AG04449 (cell line): ENCODE measurements at regions of chr7 and their contacts with region 1.

Region 1: DNA sequence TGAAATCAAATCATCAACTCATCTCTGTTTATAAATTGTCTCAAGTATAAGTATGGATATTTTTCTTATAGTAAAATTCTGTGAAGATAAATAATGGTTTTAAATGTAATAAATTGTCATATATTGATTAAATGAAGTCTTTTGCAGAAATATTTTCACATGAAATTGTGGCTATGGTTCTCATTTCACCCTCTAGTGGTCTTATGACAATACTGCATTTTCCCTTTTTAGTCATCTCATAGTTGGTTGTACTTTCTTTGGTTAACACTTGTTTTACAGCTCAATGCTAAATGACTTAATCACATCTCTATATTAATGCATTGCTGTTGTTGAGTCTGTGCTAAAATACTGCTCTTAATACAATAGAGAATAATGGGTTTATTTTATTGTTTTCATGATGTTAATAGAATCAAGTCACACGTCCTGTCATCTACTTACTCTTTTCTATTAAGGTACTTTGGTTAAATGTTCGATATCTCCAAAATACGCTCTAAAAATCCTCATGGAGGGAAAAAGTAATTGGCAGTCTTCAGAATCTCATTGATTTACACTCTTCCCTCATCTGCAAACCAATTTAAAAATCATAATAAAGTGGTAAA is 38.0 kb upstream of the CACNA2D1 start:
- DNase-seq: no peak
- H3K4me3 ChIP-seq: no peak overlapping the region
- CTCF ChIP-seq: peak; percentile 57

Region 2: DNA sequence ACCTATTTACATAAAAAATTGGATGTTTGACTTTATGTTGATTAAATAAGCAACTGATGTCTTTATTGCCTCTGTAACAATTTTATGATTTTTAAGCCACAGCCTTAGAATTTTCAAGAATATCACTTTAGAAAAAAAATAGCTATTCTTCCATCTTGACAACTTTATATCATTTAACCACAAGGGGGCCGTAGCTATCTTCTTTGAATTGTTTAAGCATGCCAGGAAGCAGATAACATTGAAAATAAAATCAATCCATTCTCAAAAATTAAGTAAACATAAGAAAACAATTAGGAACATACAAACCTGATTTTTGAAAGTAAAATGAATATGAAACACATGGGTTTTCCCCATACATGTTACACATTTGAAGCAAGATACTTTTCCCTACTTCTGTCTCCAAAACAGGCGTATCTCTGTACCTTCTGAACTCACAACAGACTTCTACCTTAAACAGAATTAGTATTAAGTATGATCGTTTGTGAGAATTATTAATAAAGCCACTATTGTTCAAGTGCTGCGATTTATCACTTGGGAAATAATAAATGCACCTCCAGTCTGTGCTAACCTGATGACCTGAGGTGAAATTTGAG is 247.0 kb before region 1 on chr7:
- CTCF ChIA-PET with region 1: interaction called, 22 read pairs
- POLR2A ChIA-PET with region 1: no interaction called
- DNase-seq: no peak
- H3K4me3 ChIP-seq: no peak overlapping the region
- CTCF ChIP-seq: peak; percentile 27

Region 3: GRCh38 chr7:82433507-82433906 is 48.1 kb before region 1 on chr7:
- CTCF ChIA-PET with region 1: no interaction called
- POLR2A ChIA-PET with region 1: no interaction called
- DNase-seq: no peak
- H3K4me3 ChIP-seq: no peak overlapping the region
- CTCF ChIP-seq: no peak

Region 4: DNA sequence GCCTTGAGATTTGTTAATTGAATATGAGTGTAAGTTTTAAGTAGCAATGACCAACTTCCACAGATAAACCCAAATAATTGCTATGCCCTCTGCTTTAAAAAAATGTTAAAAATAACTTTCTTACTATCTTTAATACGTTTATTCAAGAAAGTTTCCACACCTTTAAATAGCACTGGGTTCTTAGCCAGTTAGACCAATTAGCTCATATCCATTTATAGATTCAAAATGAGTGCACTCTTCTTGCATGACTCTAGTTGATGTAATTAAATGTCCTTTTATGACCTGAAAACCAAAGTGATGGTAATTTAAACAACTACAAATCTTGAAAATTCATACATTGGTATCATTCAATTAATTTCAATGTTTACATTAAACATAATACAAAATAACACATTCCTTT is 12.8 kb after region 1 on chr7:
- CTCF ChIA-PET with region 1: interaction called, 10 read pairs
- POLR2A ChIA-PET with region 1: no interaction called
- DNase-seq: no peak
- H3K4me3 ChIP-seq: no peak overlapping the region
- CTCF ChIP-seq: no peak

Region 5: DNA sequence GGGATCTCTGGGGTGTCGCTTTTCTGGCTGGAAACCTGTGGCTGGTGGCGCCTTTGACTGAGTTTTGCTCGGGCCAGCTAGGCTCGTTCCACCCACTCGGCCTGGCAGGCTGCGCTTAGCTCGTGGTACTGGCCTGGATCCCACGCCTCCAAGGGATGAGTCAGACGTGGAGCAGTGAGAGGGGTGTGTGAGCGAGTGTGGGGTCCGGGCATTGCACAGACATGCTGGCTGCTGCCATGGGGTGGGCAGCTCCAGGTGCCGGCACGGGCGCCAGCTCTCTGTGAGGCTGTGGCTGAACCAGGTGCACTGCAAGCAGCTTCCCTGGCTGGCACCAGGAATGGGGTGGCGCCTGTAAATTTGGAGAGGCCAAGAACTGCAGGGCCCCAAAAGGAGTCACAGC is 25.1 kb after region 1 on chr7:
- CTCF ChIA-PET with region 1: interaction called, 10 read pairs
- POLR2A ChIA-PET with region 1: no interaction called
- DNase-seq: no peak
- H3K4me3 ChIP-seq: no peak overlapping the region
- CTCF ChIP-seq: no peak